ENCODE measurements at regions of chr20 and their contacts with region 1.

Region 1: DNA sequence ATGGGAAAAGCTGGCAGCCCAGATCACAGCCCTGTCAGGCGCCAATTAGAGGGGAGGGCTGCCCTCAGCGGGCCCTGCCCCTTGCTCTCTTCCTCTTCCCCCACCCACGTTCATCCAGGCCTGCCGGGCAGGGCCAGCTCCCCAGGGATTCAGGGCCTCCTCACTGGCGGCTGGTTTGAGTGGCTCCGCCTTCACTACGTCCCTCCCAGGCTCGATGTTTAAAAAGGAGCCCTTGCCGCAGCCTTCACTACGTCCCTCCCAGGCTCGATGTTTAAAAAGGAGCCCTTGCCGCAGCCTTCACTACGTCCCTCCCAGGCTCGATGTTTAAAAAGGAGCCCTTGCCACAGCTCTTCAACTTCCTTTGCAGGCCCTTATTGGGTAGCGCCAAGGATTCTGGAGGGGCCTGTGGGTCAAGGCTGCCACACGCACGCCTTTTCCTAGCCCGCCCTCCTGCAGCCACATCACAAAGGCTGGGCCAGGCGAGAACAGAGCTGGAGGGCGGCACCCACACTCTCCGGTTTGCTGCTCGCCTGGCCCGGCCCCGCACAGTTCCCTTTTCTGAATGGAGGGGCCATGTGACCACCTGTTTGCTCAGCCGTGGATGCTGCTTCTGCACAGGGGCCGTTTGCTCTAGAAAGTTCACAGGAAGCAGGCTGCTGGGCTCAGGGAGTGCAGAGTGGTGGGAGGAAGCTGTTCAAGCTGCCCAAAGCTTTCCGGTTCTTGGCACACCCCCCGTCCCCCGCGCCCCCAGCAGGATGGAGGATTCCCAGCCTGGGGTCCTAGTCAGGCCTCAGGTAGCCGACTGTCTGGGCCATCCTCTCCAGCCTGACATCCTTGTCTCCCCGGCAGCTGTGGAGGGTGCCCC is 1.6 kb downstream of the SLC17A9 start:
- DNase-seq: peak; percentile 75
- ATAC-seq: peak; percentile 86
- H3K4me3 ChIP-seq: peak overlapping the region; percentile 98
- H3K27ac ChIP-seq: peak overlapping the region; percentile 94
- H3K4me1 ChIP-seq: peaks cover 12% of the 10 kb centered on the region
- H3K27me3 ChIP-seq: no peaks in the 10 kb centered on the region
- CTCF ChIP-seq: no peak
- EP300 ChIP-seq: peak; percentile 11 to 50; a peak in 1 of 4 replicates
- POLR2A ChIP-seq: peak; percentile 57
- RAD21 ChIP-seq: no peak

Region 2: DNA sequence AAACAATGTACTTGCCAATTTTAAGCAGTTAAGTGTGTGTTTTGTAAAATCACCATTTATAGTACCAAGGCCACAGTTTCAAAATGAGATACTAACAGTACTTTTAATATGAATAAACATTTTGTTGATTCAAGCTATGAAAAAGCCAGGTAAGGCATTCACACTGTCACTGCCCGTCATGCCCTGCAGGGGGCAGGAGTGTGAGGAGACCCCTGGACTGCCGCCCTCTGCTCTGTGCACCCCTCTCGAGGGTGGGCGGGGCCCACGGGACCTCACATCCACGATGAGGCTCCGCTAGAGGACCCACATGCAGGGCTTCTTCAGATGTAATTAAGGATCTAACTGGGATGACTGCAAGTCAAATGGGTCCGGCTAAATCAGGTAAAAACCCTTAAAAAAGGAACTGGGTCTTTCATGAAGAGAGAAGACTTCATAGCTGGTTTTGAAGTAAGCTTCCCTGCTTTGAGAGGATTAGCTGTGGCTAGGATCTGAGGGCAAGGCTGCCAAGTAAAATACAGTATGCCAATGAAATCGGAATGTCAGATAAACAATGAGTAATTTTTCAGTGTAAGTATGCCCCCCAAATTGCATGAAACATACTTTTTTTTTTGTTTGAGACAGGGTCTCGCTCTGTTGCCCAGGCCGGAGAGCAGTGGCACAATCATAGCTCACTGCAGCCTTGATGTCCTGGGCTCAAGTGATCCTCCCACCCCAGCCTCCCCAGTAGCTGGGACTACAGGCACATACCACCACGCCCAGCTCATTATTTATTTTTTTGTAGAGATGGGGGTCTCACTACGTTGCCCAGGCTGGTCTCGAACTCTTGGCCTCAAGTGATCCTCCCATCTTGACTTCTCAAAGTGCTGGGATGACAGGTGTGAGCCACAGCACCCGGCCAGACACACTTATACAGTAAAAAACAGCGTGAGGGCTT is 46.4 kb before region 1 on chr20:
- CTCF ChIA-PET with region 1: interaction called, 27 read pairs
- POLR2A ChIA-PET with region 1: interaction called, 4 read pairs
- RAD21 ChIA-PET with region 1: interaction called, 4 read pairs
- SMC1A ChIA-PET with region 1: interaction called, 7 read pairs
- in situ Hi-C with region 1: no loop called
- intact Hi-C with region 1: loop called (anchors 5 kb)
- DNase-seq: no peak
- ATAC-seq: peak; percentile 87
- H3K4me3 ChIP-seq: no peak overlapping the region
- H3K27ac ChIP-seq: no peak overlapping the region
- H3K4me1 ChIP-seq: no peaks in the 10 kb centered on the region
- H3K27me3 ChIP-seq: no peaks in the 10 kb centered on the region
- CTCF ChIP-seq: peak; percentile 24 to 72 (median 64)
- EP300 ChIP-seq: no peak
- POLR2A ChIP-seq: 0 out of 2 replicates have a peak, but pooled peaks have one; percentile 1
- RAD21 ChIP-seq: peak; percentile 35; the same call in 1 of the 2 replicates

Region 3: GRCh38 chr20:62926239-62927104 is 27.6 kb before region 1 on chr20 and contains the start of gene DIDO1:
- CTCF ChIA-PET with region 1: interaction called, 11 read pairs
- POLR2A ChIA-PET with region 1: interaction called, 16 read pairs
- RAD21 ChIA-PET with region 1: interaction called, 4 read pairs
- SMC1A ChIA-PET with region 1: interaction called, 14 read pairs
- in situ Hi-C with region 1: no loop called
- intact Hi-C with region 1: no loop called
- DNase-seq: peak; percentile 56
- ATAC-seq: peak; percentile 82
- H3K4me3 ChIP-seq: peak within 1 kb of the TSS; percentile 64
- H3K27ac ChIP-seq: peak within 1 kb of the TSS; percentile 96
- H3K4me1 ChIP-seq: peaks cover 19% of the 10 kb centered on the region
- H3K27me3 ChIP-seq: no peaks in the 10 kb centered on the region
- CTCF ChIP-seq: peak; percentile 34 to 59 (median 47); a peak in 5 of 6 replicates
- EP300 ChIP-seq: no peak
- POLR2A ChIP-seq: peak; percentile 80
- RAD21 ChIP-seq: no peak
- polyA plus RNA-seq, gene DIDO1: 5.5 to 7.8 TPM

Region 4: GRCh38 chr20:62972270-62973032 is 18.4 kb after region 1 on chr20:
- CTCF ChIA-PET with region 1: interaction called, 9 read pairs
- POLR2A ChIA-PET with region 1: interaction called, 8 read pairs
- RAD21 ChIA-PET with region 1: interaction called, 19 read pairs
- SMC1A ChIA-PET with region 1: interaction called, 12 read pairs
- in situ Hi-C with region 1: no loop called
- intact Hi-C with region 1: no loop called
- DNase-seq: peak; percentile 49
- ATAC-seq: peak; percentile 89
- H3K4me3 ChIP-seq: no peak overlapping the region
- H3K27ac ChIP-seq: no peak overlapping the region
- H3K4me1 ChIP-seq: peaks cover 15% of the 10 kb centered on the region
- H3K27me3 ChIP-seq: peaks cover 0 to 6% of the 10 kb centered on the region in 2 experiments; a peak in 2 of 4 replicates
- CTCF ChIP-seq: peak; percentile 96 to 98 (median 98); a peak in 5 of 6 replicates
- EP300 ChIP-seq: no peak; a peak in 1 of 4 replicates
- POLR2A ChIP-seq: no peak
- RAD21 ChIP-seq: peak; percentile 91

Region 5: GRCh38 chr20:63009045-63009961 is 55.2 kb after region 1 on chr20:
- CTCF ChIA-PET with region 1: interaction called, 23 read pairs
- POLR2A ChIA-PET with region 1: interaction called, 17 read pairs
- RAD21 ChIA-PET with region 1: interaction called, 30 read pairs
- SMC1A ChIA-PET with region 1: interaction called, 23 read pairs
- in situ Hi-C with region 1: no loop called
- intact Hi-C with region 1: no loop called
- DNase-seq: peak; percentile 60
- ATAC-seq: peak; percentile 73
- H3K4me3 ChIP-seq: peak overlapping the region; percentile 78
- H3K27ac ChIP-seq: peak overlapping the region; percentile 97
- H3K4me1 ChIP-seq: peaks cover 24% of the 10 kb centered on the region
- H3K27me3 ChIP-seq: peaks cover 12 to 14% of the 10 kb centered on the region in 2 experiments
- CTCF ChIP-seq: peak; percentile 82 to 99 (median 95); a peak in 5 of 6 replicates
- EP300 ChIP-seq: peak in 1 of 2 experiments; percentile 36; a peak in 1 of 4 replicates
- POLR2A ChIP-seq: peak; percentile 75
- RAD21 ChIP-seq: peak; percentile 96

Measured in GM12878 (cell line).